Transverse colon (tissue), 4 donors: ENCODE measurements at regions of chr1 and their contacts with region 1.

Region 1: DNA sequence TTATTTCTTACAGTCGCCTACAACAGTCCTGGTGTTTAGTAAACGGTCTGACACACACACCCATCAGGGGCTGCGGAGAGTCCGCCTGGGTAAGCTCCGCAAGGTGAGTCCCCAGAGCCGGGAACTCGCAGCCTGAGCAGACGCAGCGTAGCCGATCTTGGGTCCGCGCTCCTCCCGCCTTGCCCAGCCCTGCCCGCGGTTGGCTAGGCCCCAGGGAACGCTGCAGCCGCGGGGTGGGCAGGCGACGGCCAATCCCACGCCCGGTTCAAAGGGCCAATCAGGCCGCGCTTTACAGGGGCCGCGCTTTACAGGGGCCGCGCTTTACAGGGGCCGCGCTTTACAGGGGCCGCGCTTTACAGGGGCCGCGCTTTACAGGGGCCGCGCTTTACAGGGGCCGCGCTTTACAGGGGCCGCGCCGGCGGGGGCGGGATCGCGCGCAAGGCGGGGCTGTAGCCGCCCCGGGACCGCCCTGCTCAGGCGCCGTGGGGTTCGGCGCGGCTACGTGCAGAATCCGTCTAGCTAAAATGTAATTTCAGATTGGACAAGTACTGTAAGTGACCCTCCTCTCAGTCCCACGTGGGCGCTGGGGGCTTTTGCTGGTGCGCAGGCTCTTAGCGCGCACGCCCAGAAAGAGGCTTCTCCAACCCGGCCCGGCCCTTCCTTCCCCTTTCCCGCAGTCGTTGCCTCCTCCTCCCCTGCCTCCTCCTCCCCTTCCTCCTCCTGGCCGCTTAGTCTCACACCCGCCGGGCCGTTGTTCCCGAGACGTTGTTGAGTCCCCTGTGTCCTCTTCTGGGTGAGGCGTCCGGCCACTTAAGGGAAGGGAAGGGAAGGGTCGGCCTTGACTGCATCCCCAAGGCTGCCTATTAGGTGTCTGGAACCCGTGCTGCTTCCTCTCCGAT is at the start of gene FGGY:
- DNase-seq: peak; percentile 97
- H3K4me3 ChIP-seq: peak within 1 kb of the TSS; percentile 34 to 57 (median 41)
- H3K27ac ChIP-seq: peak within 1 kb of the TSS; percentile 92 to 98 (median 95)
- H3K4me1 ChIP-seq: peaks cover 11 to 28% (median 14%) of the 10 kb centered on the region in 4 donors
- H3K27me3 ChIP-seq: no peaks in the 10 kb centered on the region
- CTCF ChIP-seq: peak in 1 of 5 experiments; percentile 18
- EP300 ChIP-seq: no peak
- POLR2A ChIP-seq: peak; percentile 92
- total RNA-seq, gene FGGY: 18.2 to 97.7 (median 27.1) TPM

Region 2: GRCh38 chr1:58903514-58904298 is 392.9 kb before region 1 on chr1:
- in situ Hi-C with region 1: loop called in 1 of 4 experiments (anchors 25 kb)
- intact Hi-C with region 1: loop called (anchors 5 kb)
- DNase-seq: peak; percentile 94
- H3K4me3 ChIP-seq: peak overlapping the region; percentile 23 to 58 (median 39)
- H3K27ac ChIP-seq: peak overlapping the region; percentile 95 to 96 (median 96)
- H3K4me1 ChIP-seq: peaks cover 16 to 51% (median 32%) of the 10 kb centered on the region in 4 donors
- H3K27me3 ChIP-seq: no peaks in the 10 kb centered on the region
- CTCF ChIP-seq: no peak
- EP300 ChIP-seq: peak; percentile 38
- POLR2A ChIP-seq: peak; percentile 96

Region 3: DNA sequence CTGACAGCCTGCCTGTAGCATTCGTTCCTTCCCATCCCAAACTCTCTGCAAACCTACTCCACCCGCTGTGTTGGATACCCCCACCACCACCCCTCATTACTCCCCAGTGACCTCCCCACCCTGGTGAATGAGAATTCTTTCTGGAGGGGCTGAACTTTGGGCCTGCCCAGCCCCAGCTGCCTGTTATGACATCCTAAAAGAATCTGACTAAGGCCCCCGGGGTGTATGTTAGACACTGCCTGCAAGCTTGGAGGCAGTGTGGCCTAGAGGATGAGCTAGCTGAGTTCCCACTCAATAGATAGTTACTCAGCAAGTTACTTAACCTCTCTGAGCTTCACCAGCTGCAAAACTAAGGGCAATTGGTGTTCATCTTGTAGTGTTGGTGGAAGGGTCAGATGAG is 110.0 kb before region 1 on chr1:
- in situ Hi-C with region 1: no loop called
- intact Hi-C with region 1: no loop called
- DNase-seq: no peak
- H3K4me3 ChIP-seq: no peak overlapping the region
- H3K27ac ChIP-seq: no peak overlapping the region
- H3K4me1 ChIP-seq: no peaks in the 10 kb centered on the region
- H3K27me3 ChIP-seq: no peaks in the 10 kb centered on the region
- CTCF ChIP-seq: no peak
- EP300 ChIP-seq: no peak
- POLR2A ChIP-seq: no peak

Region 4: GRCh38 chr1:59601041-59601441 is 304.4 kb after region 1 on chr1:
- in situ Hi-C with region 1: no loop called
- intact Hi-C with region 1: loop called (anchors 2 kb)
- DNase-seq: peak; percentile 26
- H3K4me3 ChIP-seq: no peak overlapping the region
- H3K27ac ChIP-seq: peak overlapping the region; percentile 34 to 80 (median 49)
- H3K4me1 ChIP-seq: peaks cover 9 to 20% (median 12%) of the 10 kb centered on the region in 4 donors
- H3K27me3 ChIP-seq: no peaks in the 10 kb centered on the region
- CTCF ChIP-seq: no peak
- EP300 ChIP-seq: no peak
- POLR2A ChIP-seq: no peak